B cell (primary cell): ENCODE measurements at regions of chr9 and their contacts with region 1.

Region 1: GRCh38 chr9:100058699-100059579 is 39.9 kb downstream of the ERP44 start:
- DNase-seq: peak; percentile 71
- ATAC-seq: peak; percentile 75
- H3K4me3 ChIP-seq: peak overlapping the region in 1 of 5 experiments; percentile 15
- H3K4me3 Mint-ChIP-seq: peak overlapping the region; percentile 80
- H3K27ac ChIP-seq: peak overlapping the region; percentile 58 to 61
- H3K27ac Mint-ChIP-seq: peak overlapping the region; percentile 75
- H3K4me1 ChIP-seq: peaks cover 32 to 44% of the 10 kb centered on the region in 2 donors
- H3K4me1 Mint-ChIP-seq: peaks cover 53% of the 10 kb centered on the region
- H3K27me3 ChIP-seq: no peaks in the 10 kb centered on the region
- H3K27me3 Mint-ChIP-seq: no peaks in the 10 kb centered on the region
- CTCF ChIP-seq: no peak

Region 2: DNA sequence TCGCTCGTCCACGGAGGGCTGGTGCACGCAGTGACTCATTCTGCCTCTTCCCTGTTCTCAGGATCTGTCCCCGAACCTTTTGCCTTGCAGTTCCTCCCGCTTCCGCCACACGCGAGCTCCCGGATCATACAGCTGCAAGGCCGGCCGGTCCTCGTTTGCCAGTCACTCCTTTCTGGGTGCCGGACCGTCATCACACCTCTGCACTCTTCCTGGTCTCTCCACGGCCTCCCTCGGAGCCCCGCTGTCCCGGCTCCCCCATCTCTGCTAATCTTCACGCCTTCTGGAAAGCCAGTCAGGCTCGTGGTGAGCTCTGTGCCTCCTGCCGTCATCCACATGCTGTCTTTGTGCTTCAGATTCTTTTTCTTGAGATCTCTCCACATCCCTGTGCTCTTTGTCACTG is 60.7 kb before region 1 on chr9:
- CTCF ChIA-PET with region 1: no interaction called
- POLR2A ChIA-PET with region 1: no interaction called
- intact Hi-C with region 1: no loop called
- DNase-seq: no peak
- ATAC-seq: no peak
- H3K4me3 ChIP-seq: no peak overlapping the region
- H3K4me3 Mint-ChIP-seq: no peak overlapping the region
- H3K27ac ChIP-seq: no peak overlapping the region
- H3K27ac Mint-ChIP-seq: peak overlapping the region; percentile 6
- H3K4me1 ChIP-seq: no peaks in the 10 kb centered on the region
- H3K4me1 Mint-ChIP-seq: peaks cover 4% of the 10 kb centered on the region
- H3K27me3 ChIP-seq: no peaks in the 10 kb centered on the region
- H3K27me3 Mint-ChIP-seq: no peaks in the 10 kb centered on the region
- CTCF ChIP-seq: no peak

Region 3: DNA sequence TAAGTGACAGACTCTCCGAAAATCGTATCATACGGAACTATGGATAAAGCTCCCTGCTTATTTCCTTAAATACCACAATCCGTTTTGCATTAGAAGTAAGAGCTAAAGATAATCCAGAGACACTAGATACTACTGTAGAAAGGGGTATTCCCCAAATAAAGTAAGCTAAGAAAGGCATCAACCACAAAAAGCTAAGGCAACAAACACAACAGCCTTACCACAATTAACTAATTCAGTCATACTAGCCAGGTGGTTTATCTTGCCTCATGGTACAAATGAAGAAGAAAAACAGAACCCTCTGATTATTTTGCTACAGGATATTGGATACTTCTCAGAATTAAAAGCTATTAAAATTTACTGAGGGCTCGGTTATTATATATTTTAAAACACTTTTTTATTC is 25.8 kb after region 1 on chr9:
- CTCF ChIA-PET with region 1: interaction called, 3 read pairs
- POLR2A ChIA-PET with region 1: no interaction called
- intact Hi-C with region 1: loop called (anchors 2 kb)
- DNase-seq: peak; percentile 76
- ATAC-seq: peak; percentile 68
- H3K4me3 ChIP-seq: peak overlapping the region in 3 of 5 experiments; percentile 55 to 68 (median 58)
- H3K4me3 Mint-ChIP-seq: peak overlapping the region; percentile 73
- H3K27ac ChIP-seq: peak overlapping the region; percentile 80 to 86
- H3K27ac Mint-ChIP-seq: peak overlapping the region; percentile 79
- H3K4me1 ChIP-seq: peaks cover 46 to 70% of the 10 kb centered on the region in 2 donors
- H3K4me1 Mint-ChIP-seq: peaks cover 78% of the 10 kb centered on the region
- H3K27me3 ChIP-seq: no peaks in the 10 kb centered on the region
- H3K27me3 Mint-ChIP-seq: no peaks in the 10 kb centered on the region
- CTCF ChIP-seq: no peak